T-cell (primary cell): ENCODE measurements at regions of chr2 and their contacts with region 1.

Region 1: GRCh38 chr2:219176818-219177551 is at the start of gene CNPPD1:
- DNase-seq: peak; percentile 76 to 93 (median 85)
- ATAC-seq: peak; percentile 77 to 81 (median 79)
- H3K4me3 ChIP-seq: peak within 1 kb of the TSS; percentile 60 to 92
- H3K4me3 Mint-ChIP-seq: peak within 1 kb of the TSS; percentile 88 to 96 (median 92)
- H3K27ac ChIP-seq: peak within 1 kb of the TSS; percentile 88
- H3K27ac Mint-ChIP-seq: peak within 1 kb of the TSS; percentile 99
- H3K4me1 ChIP-seq: peaks cover 23 to 73% of the 10 kb centered on the region in 2 experiments
- H3K4me1 Mint-ChIP-seq: peaks cover 70 to 77% (median 70%) of the 10 kb centered on the region in 3 donors
- H3K27me3 ChIP-seq: no peaks in the 10 kb centered on the region
- H3K27me3 Mint-ChIP-seq: no peaks in the 10 kb centered on the region
- total RNA-seq, gene CNPPD1: 49.2 to 89.5 (median 83.2) TPM

Region 2: GRCh38 chr2:219160186-219161017 is 16.6 kb before region 1 on chr2 and contains the start of gene NHEJ1:
- CTCF ChIA-PET with region 1: interaction called, 11 to 14 read pairs
- POLR2A ChIA-PET with region 1: no interaction called
- DNase-seq: peak; percentile 74 to 95 (median 86)
- ATAC-seq: peak; percentile 85 to 93 (median 86)
- H3K4me3 ChIP-seq: peak within 1 kb of the TSS; percentile 65 to 85
- H3K4me3 Mint-ChIP-seq: peak within 1 kb of the TSS; percentile 86 to 94 (median 88)
- H3K27ac ChIP-seq: peak within 1 kb of the TSS; percentile 68
- H3K27ac Mint-ChIP-seq: peak within 1 kb of the TSS; percentile 95 to 97
- H3K4me1 ChIP-seq: peaks cover 4 to 14% of the 10 kb centered on the region in 2 experiments
- H3K4me1 Mint-ChIP-seq: peaks cover 16 to 31% (median 22%) of the 10 kb centered on the region in 3 donors
- H3K27me3 ChIP-seq: no peaks in the 10 kb centered on the region
- H3K27me3 Mint-ChIP-seq: no peaks in the 10 kb centered on the region
- total RNA-seq, gene NHEJ1: 17.3 to 21.1 (median 18.2) TPM